MCF 10A (cell line): ENCODE measurements at regions of chr17 and their contacts with region 1.

Region 1: DNA sequence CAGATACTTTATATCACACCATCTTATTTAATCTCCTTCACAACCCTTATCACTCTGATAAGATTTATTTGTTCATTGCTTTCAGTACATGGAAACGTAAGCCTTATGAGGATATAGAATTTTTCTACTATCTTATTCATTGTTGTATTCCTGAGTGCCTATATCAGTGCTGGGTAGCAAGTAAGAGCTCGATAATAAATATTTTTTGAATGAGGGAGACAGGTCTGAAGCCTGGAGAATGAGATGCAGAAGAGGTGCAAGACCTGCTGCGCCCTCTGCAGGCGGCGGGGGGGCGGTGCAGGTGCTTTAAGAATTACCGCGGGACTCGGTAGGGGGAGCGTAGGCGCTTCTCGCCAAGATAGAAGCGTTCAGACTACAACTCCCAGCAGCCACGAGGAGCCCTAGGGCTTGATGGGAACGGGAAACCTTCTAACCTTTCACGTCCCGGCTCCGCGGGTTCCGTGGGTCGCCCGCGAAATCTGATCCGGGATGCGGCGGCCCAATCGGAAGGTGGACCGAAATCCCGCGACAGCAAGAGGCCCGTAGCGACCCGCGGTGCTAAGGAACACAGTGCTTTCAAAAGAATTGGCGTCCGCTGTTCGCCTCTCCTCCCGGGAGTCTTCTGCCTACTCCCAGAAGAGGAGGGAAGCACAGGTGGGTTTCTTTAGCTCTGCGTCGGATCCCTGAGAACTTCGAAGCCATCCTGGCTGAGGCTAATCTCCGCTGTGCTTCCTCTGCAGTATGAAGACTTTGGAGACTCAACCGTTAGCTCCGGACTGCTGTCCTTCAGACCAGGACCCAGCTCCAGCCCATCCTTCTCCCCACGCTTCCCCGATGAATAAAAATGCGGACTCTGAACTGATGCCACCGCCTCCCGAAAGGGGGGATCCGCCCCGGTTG is at the start of gene WRAP53:
- DNase-seq: peak; percentile 100
- H3K4me3 Mint-ChIP-seq: peak within 1 kb of the TSS; percentile 97
- H3K27ac Mint-ChIP-seq: peak within 1 kb of the TSS; percentile 100
- H3K4me1 Mint-ChIP-seq: peaks cover 22% of the 10 kb centered on the region
- H3K27me3 Mint-ChIP-seq: no peaks in the 10 kb centered on the region
- CTCF ChIP-seq: peak; percentile 97
- total RNA-seq, gene WRAP53: 10.7 and 11.7 TPM in 2 replicates

Region 2: GRCh38 chr17:6969323-6969726 is 718.8 kb before region 1 on chr17:
- CTCF ChIA-PET with region 1: no interaction called
- POLR2A ChIA-PET with region 1: no interaction called
- intact Hi-C with region 1: no loop called
- DNase-seq: peak; percentile 21
- H3K4me3 Mint-ChIP-seq: no peak overlapping the region
- H3K27ac Mint-ChIP-seq: no peak overlapping the region
- H3K4me1 Mint-ChIP-seq: no peaks in the 10 kb centered on the region
- H3K27me3 Mint-ChIP-seq: no peaks in the 10 kb centered on the region
- CTCF ChIP-seq: no peak

Region 3: DNA sequence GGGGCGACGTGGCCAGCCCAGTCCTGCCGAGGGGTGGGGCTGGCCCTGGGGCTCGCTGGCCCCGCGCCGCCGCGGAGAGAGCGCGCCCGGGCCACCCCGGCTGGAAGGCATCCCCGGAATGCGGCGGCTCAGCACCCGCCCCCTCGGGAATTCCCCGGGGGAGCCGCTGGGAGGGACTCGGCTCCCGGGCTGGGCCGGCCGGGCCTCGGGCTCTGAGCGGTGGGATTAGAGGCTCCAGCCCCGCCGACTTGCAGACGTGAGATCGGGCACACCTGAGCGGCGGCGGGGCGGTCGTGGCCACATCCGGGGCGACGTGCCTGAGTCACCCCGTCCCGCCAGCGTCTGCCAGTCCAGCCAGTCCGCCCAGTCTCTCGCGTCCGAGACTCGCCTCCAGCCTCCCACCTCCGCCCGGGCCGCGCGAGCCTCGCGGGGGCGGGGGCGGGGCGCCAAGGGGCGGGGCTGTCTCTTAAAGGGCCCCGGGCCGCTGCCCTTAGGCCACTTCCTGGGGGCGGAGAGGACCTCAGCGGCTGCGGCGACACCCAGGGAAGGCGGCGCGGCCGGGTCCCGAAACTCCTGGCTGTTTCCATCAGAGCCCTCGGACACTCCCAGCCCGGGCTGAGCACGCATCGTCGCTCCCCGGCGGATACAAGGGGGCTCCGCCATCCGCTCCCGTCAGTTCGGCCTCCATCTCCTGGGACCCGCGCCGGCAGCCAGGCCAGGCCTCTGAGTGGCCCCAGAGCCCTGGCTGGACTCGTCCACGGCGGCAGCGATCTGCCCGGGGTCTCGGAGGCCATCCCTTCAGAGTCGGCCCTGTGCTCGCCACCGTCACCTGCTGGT is 336.3 kb before region 1 on chr17 and contains the start of gene KCTD11:
- CTCF ChIA-PET with region 1: interaction called, 11 read pairs
- POLR2A ChIA-PET with region 1: interaction called, 12 read pairs
- intact Hi-C with region 1: loop called (anchors 10 kb)
- DNase-seq: peak; percentile 89
- H3K4me3 Mint-ChIP-seq: peak within 1 kb of the TSS; percentile 85
- H3K27ac Mint-ChIP-seq: peak within 1 kb of the TSS; percentile 93
- H3K4me1 Mint-ChIP-seq: peaks cover 17% of the 10 kb centered on the region
- H3K27me3 Mint-ChIP-seq: no peaks in the 10 kb centered on the region
- CTCF ChIP-seq: no peak
- total RNA-seq, gene KCTD11: 9.2 and 10.1 TPM in 2 replicates

Region 4: GRCh38 chr17:7515911-7516610 is 172.1 kb before region 1 on chr17:
- CTCF ChIA-PET with region 1: interaction called, 11 read pairs
- POLR2A ChIA-PET with region 1: interaction called, 4 read pairs
- intact Hi-C with region 1: loop called (anchors 10 kb)
- DNase-seq: no peak
- H3K4me3 Mint-ChIP-seq: no peak overlapping the region
- H3K27ac Mint-ChIP-seq: no peak overlapping the region
- H3K4me1 Mint-ChIP-seq: no peaks in the 10 kb centered on the region
- H3K27me3 Mint-ChIP-seq: no peaks in the 10 kb centered on the region
- CTCF ChIP-seq: no peak

Region 5: DNA sequence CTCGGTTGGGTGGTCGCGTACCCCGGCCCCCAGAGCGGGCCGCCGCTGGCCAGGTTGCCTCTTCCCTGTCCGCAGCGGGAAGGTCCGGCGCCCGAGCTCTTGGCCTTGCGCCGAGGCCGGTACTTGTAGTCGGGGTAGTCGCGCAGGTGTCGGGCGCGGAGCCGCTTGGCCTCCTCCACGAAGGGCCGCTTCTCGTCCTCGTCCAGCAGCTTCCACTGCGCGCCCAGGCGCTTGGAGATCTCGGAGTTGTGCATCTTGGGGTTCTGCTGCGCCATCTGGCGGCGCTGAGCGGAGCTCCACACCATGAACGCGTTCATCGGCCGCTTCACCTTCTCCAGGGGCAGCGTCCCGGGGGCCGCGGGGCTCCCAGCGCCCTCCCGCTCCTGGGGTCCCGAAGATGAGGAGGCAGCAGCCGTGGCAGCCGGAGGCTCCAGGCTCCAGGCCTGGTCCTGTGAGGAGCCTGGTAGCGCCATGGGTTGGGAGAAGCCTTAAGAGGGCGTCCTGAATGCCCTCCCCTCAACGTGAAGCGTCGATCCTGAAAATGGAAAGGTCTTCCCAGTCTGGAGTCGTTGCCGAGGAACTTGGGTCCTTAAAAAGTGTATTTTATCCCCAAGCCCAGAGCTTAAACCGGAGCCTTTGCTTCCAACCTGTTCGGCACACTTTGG is 98.8 kb before region 1 on chr17:
- CTCF ChIA-PET with region 1: interaction called, 89 read pairs
- POLR2A ChIA-PET with region 1: interaction called, 303 read pairs
- intact Hi-C with region 1: loop called (anchors 1 kb)
- DNase-seq: peak; percentile 92
- H3K4me3 Mint-ChIP-seq: peak overlapping the region; percentile 76
- H3K27ac Mint-ChIP-seq: peak overlapping the region; percentile 78
- H3K4me1 Mint-ChIP-seq: peaks cover 42% of the 10 kb centered on the region
- H3K27me3 Mint-ChIP-seq: no peaks in the 10 kb centered on the region
- CTCF ChIP-seq: peak; percentile 88

Region 6: DNA sequence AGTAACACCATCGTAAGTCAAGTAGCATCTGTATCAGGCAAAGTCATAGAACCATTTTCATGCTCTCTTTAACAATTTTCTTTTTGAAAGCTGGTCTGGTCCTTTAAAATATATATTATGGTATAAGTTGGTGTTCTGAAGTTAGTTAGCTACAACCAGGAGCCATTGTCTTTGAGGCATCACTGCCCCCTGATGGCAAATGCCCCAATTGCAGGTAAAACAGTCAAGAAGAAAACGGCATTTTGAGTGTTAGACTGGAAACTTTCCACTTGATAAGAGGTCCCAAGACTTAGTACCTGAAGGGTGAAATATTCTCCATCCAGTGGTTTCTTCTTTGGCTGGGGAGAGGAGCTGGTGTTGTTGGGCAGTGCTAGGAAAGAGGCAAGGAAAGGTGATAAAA is 14.9 kb before region 1 on chr17:
- CTCF ChIA-PET with region 1: interaction called, 7 read pairs
- POLR2A ChIA-PET with region 1: interaction called, 17 read pairs
- intact Hi-C with region 1: no loop called
- DNase-seq: peak; percentile 46
- H3K4me3 Mint-ChIP-seq: no peak overlapping the region
- H3K27ac Mint-ChIP-seq: no peak overlapping the region
- H3K4me1 Mint-ChIP-seq: no peaks in the 10 kb centered on the region
- H3K27me3 Mint-ChIP-seq: no peaks in the 10 kb centered on the region
- CTCF ChIP-seq: peak; percentile 41

Region 7: GRCh38 chr17:7856883-7857723 is 168.9 kb after region 1 on chr17 and contains the start of gene NAA38:
- CTCF ChIA-PET with region 1: no interaction called
- POLR2A ChIA-PET with region 1: interaction called, 17 read pairs
- intact Hi-C with region 1: no loop called
- DNase-seq: peak; percentile 99
- H3K4me3 Mint-ChIP-seq: no peak within 1 kb of the TSS
- H3K27ac Mint-ChIP-seq: no peak within 1 kb of the TSS
- H3K4me1 Mint-ChIP-seq: peaks cover 7% of the 10 kb centered on the region
- H3K27me3 Mint-ChIP-seq: no peaks in the 10 kb centered on the region
- CTCF ChIP-seq: peak; percentile 22
- total RNA-seq, gene NAA38: 70.2 and 83.4 TPM in 2 replicates